Endothelial cell of umbilical vein (primary cell): ENCODE measurements at regions of chr4 and their contacts with region 1.

Region 1: GRCh38 chr4:108881190-108881589 is 118.3 kb upstream of the ETNPPL start:
- DNase-seq: peak; percentile 85
- H3K4me3 ChIP-seq: no peak overlapping the region
- H3K27ac ChIP-seq: peak overlapping the region; percentile 79
- H3K4me1 ChIP-seq: peaks cover 55% of the 10 kb centered on the region
- H3K27me3 ChIP-seq: peaks cover 0 to 4% of the 10 kb centered on the region in 2 experiments
- CTCF ChIP-seq: no peak
- POLR2A ChIP-seq: no peak

Region 2: GRCh38 chr4:108255203-108255747 is 625.9 kb before region 1 on chr4:
- CTCF ChIA-PET with region 1: no interaction called
- POLR2A ChIA-PET with region 1: no interaction called
- dilution Hi-C with region 1: no loop called
- intact Hi-C with region 1: no loop called
- DNase-seq: no peak
- H3K4me3 ChIP-seq: no peak overlapping the region
- H3K27ac ChIP-seq: no peak overlapping the region
- H3K4me1 ChIP-seq: no peaks in the 10 kb centered on the region
- H3K27me3 ChIP-seq: no peaks in the 10 kb centered on the region
- CTCF ChIP-seq: no peak
- POLR2A ChIP-seq: no peak

Region 3: DNA sequence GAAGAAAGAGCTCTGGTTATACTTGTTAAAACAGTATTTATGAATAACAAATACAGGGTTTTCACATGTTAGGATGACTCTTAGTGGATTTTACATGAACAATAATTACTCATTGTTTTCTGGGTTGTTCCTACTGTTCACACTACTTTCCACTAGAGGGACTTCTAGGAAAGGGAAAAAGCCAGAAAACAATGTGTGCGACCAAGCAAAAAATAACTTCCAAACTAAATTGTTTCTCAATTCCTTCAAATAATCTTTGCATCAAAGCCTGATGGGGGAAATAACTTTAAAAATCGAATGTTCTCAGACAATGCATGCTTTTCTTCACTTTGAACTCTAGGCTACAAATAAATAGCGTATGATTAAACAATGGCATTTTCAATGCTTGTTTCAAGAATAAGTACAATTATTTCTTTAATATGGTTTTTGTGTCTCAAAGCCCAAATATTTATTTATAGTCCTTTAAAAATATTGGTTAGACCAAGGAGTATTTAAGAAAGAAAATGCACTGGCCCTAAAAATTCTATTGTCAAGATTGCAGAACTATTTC is 46.3 kb before region 1 on chr4:
- CTCF ChIA-PET with region 1: interaction called, 3 read pairs
- POLR2A ChIA-PET with region 1: no interaction called
- dilution Hi-C with region 1: no loop called
- intact Hi-C with region 1: loop called (anchors 1 kb)
- DNase-seq: peak; percentile 53
- H3K4me3 ChIP-seq: no peak overlapping the region
- H3K27ac ChIP-seq: no peak overlapping the region
- H3K4me1 ChIP-seq: no peaks in the 10 kb centered on the region
- H3K27me3 ChIP-seq: peaks cover 0 to 6% of the 10 kb centered on the region in 2 experiments
- CTCF ChIP-seq: peak; percentile 49 to 60
- POLR2A ChIP-seq: no peak

Region 4: GRCh38 chr4:108867476-108867875 is 13.7 kb before region 1 on chr4:
- CTCF ChIA-PET with region 1: no interaction called
- POLR2A ChIA-PET with region 1: no interaction called
- dilution Hi-C with region 1: no loop called
- intact Hi-C with region 1: no loop called
- DNase-seq: no peak
- H3K4me3 ChIP-seq: no peak overlapping the region
- H3K27ac ChIP-seq: no peak overlapping the region
- H3K4me1 ChIP-seq: no peaks in the 10 kb centered on the region
- H3K27me3 ChIP-seq: peaks cover 0 to 3% of the 10 kb centered on the region in 2 experiments
- CTCF ChIP-seq: no peak
- POLR2A ChIP-seq: no peak

Region 5: DNA sequence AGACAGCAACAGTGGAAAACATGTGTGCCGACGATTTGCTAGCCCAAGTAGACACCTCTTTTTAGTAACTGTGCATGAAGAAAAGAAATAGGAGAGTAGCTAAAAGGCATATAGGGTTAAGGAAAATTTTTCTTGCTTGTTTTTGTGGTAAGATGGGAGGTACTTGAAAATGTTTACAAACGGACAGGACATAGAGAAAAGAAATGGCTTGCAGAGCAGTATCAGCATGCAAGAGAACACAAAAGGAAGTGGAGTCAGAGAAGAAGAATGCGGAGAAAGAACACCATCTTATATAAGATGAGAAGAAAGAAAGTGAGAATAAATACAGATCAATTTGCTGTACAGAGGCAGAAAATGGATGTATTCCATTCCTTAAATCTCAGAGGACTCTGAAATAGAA is 145.4 kb after region 1 on chr4:
- CTCF ChIA-PET with region 1: no interaction called
- POLR2A ChIA-PET with region 1: no interaction called
- dilution Hi-C with region 1: no loop called
- intact Hi-C with region 1: loop called (anchors 1 kb)
- DNase-seq: peak; percentile 56
- H3K4me3 ChIP-seq: peak overlapping the region in 1 of 3 experiments; percentile 46
- H3K27ac ChIP-seq: peak overlapping the region; percentile 86
- H3K4me1 ChIP-seq: peaks cover 23% of the 10 kb centered on the region
- H3K27me3 ChIP-seq: no peaks in the 10 kb centered on the region
- CTCF ChIP-seq: no peak
- POLR2A ChIP-seq: no peak

Region 6: DNA sequence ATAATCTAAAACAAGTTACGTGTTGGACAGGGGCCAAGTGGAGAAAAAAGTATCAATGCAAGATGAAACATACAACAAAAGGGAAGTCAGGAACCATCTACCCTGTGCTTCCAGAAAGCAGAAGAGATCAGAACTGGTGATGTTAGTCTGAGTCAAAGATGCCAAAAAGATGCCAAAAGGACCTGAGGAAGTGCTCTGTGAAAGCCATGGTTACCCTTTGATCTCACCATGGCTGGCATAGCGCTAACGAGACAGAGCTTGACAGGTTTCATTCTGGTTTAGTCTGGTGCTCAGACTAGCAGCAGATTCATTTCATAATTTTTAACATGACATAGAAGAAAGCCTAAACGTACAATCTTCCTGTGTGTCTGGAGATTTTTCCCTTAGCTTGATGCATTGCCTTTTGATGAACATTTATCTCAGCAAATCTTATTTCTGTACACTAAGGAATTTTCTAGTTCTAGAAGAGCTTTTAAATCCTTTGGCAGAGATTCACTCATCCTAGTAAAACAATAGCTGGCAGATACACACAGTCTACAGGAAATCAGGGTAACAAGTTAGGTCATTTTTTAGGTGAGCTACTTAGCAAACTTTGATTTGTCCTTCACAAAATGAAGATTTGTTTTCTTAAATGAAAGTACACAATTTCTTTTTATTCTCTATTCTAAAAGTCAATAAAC is 333.6 kb after region 1 on chr4:
- CTCF ChIA-PET with region 1: no interaction called
- POLR2A ChIA-PET with region 1: no interaction called
- dilution Hi-C with region 1: no loop called
- intact Hi-C with region 1: loop called (anchors 1 kb)
- DNase-seq: peak; percentile 82
- H3K4me3 ChIP-seq: no peak overlapping the region
- H3K27ac ChIP-seq: peak overlapping the region; percentile 91
- H3K4me1 ChIP-seq: peaks cover 29% of the 10 kb centered on the region
- H3K27me3 ChIP-seq: no peaks in the 10 kb centered on the region
- CTCF ChIP-seq: no peak
- POLR2A ChIP-seq: no peak

Region 7: GRCh38 chr4:109365909-109366308 is 484.7 kb after region 1 on chr4:
- CTCF ChIA-PET with region 1: no interaction called
- POLR2A ChIA-PET with region 1: no interaction called
- dilution Hi-C with region 1: no loop called
- intact Hi-C with region 1: loop called (anchors 1 kb)
- DNase-seq: peak; percentile 78
- H3K4me3 ChIP-seq: peak overlapping the region in 1 of 3 experiments; percentile 25
- H3K27ac ChIP-seq: peak overlapping the region; percentile 90
- H3K4me1 ChIP-seq: peaks cover 16% of the 10 kb centered on the region
- H3K27me3 ChIP-seq: no peaks in the 10 kb centered on the region
- CTCF ChIP-seq: no peak
- POLR2A ChIP-seq: no peak

Region 8: DNA sequence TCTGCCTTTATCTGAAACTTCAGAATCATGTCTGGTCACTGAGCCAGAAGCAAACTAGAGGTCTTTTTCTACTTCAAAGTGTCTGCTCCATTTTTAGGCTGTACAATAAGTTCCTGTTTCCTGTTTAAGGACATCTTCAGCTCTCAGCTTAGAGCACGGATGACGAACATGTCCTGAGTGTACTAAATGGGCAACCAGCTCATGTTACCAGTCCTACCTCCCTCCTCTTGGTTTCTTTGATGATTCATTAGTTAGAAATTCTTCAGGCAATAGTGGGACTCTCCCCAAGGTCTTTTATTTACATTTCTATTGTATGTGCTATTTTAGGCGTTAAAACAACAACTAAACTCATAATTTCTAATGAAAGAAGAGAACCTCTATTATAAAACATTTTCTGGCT is 1652.8 kb after region 1 on chr4:
- CTCF ChIA-PET with region 1: no interaction called
- POLR2A ChIA-PET with region 1: no interaction called
- dilution Hi-C with region 1: no loop called
- intact Hi-C with region 1: loop called (anchors 5 kb)
- DNase-seq: peak; percentile 94
- H3K4me3 ChIP-seq: peak overlapping the region in 1 of 3 experiments; percentile 54
- H3K27ac ChIP-seq: peak overlapping the region; percentile 94
- H3K4me1 ChIP-seq: peaks cover 38% of the 10 kb centered on the region
- H3K27me3 ChIP-seq: no peaks in the 10 kb centered on the region
- CTCF ChIP-seq: no peak
- POLR2A ChIP-seq: no peak